Colonic mucosa (tissue), 4 donors: ENCODE measurements at regions of chr7 and their contacts with region 1.

Region 1: DNA sequence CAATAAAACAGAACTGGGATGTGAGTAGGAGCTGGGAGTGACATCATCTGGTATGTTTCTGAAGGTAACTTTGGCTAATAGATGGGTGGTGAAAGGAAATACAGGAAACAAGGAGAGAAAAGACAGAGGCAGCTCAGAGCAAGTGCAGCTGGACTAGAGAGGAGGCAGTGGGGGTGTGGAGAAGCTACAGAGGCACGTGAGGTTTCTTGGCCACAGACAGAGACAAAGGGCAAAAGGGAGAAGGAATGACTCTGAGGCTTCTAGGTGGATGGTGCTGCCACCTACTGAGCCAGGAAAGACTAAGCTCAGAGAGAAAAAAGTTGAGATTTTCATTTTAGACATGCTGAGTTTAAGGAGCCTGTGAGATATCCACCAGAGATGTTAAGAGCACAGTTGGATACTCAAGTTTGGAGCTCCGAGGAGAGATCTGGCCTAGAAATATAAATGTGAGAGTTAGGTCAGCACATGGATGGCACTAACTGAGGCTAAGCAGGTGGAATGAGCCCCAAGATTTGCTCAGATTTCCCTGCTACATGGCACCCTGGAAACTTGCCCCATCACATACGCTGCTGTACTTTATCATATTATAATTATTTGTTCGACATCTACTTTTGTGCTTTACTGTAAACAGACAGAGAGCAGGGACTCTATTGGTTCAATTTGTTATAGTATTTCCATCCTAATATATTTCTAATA is 293.0 kb upstream of the IMMP2L start:
- DNase-seq: peak; percentile 69
- H3K4me3 ChIP-seq: no peak overlapping the region
- H3K27ac ChIP-seq: no peak overlapping the region
- H3K4me1 ChIP-seq: peaks cover 7% of the 10 kb centered on the region
- H3K27me3 ChIP-seq: no peaks in the 10 kb centered on the region
- CTCF ChIP-seq: peak; percentile 22

Region 2: GRCh38 chr7:111752022-111752582 is 103.2 kb before region 1 on chr7:
- intact Hi-C with region 1: loop called (anchors 5 kb)
- DNase-seq: peak; percentile 66
- H3K4me3 ChIP-seq: no peak overlapping the region
- H3K27ac ChIP-seq: no peak overlapping the region
- H3K4me1 ChIP-seq: no peaks in the 10 kb centered on the region
- H3K27me3 ChIP-seq: no peaks in the 10 kb centered on the region
- CTCF ChIP-seq: peak; percentile 69

Region 3: GRCh38 chr7:111763221-111763801 is 92.0 kb before region 1 on chr7:
- intact Hi-C with region 1: loop called (anchors 5 kb)
- DNase-seq: no peak
- H3K4me3 ChIP-seq: no peak overlapping the region
- H3K27ac ChIP-seq: no peak overlapping the region
- H3K4me1 ChIP-seq: no peaks in the 10 kb centered on the region
- H3K27me3 ChIP-seq: no peaks in the 10 kb centered on the region
- CTCF ChIP-seq: peak; percentile 50